ENCODE measurements at regions of chr2 and their contacts with region 1.

Region 1: DNA sequence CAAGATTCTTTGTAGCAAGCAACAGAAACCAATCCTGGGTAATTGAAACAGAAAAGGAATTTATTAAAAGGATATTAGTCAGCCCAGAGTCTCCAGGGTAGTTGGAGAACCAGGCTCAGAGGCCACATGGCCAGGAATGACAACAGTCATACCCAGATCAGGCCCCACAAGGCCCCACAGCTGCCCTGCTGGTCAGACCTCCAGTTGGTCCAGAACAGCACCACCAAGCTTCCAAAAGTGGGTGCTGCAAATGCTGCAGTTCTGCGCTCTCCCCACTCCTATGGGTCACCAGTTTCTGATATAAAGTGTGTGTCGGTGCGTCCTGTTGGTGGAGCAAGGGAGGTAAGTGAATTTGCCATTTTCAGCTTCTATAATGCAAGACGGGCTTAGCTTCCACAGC is 29.9 kb downstream of the KLHL29 start:
- DNase-seq: no peak
- H3K4me3 Mint-ChIP-seq: no peak overlapping the region
- H3K27ac Mint-ChIP-seq: no peak overlapping the region
- H3K4me1 Mint-ChIP-seq: peaks cover 45% of the 10 kb centered on the region
- H3K27me3 Mint-ChIP-seq: no peaks in the 10 kb centered on the region
- CTCF ChIP-seq: no peak

Region 2: GRCh38 chr2:23426263-23426905 is 11.5 kb after region 1 on chr2:
- CTCF ChIA-PET with region 1: interaction called, 8 read pairs
- POLR2A ChIA-PET with region 1: interaction called, 11 read pairs
- intact Hi-C with region 1: no loop called
- DNase-seq: peak; percentile 67
- H3K4me3 Mint-ChIP-seq: peak overlapping the region; percentile 9
- H3K27ac Mint-ChIP-seq: peak overlapping the region; percentile 94
- H3K4me1 Mint-ChIP-seq: peaks cover 27% of the 10 kb centered on the region
- H3K27me3 Mint-ChIP-seq: no peaks in the 10 kb centered on the region
- CTCF ChIP-seq: no peak

Region 3: GRCh38 chr2:23449413-23449812 is 34.5 kb after region 1 on chr2:
- CTCF ChIA-PET with region 1: no interaction called
- POLR2A ChIA-PET with region 1: no interaction called
- intact Hi-C with region 1: loop called (anchors 1 kb)
- DNase-seq: no peak
- H3K4me3 Mint-ChIP-seq: no peak overlapping the region
- H3K27ac Mint-ChIP-seq: no peak overlapping the region
- H3K4me1 Mint-ChIP-seq: peaks cover 14% of the 10 kb centered on the region
- H3K27me3 Mint-ChIP-seq: no peaks in the 10 kb centered on the region
- CTCF ChIP-seq: no peak